ENCODE measurements at regions of chr7 and their contacts with region 1.

Region 1: GRCh38 chr7:50304158-50304910 is at the start of gene IKZF1:
- DNase-seq: peak; percentile 45 to 71 (median 53)
- H3K4me3 ChIP-seq: peak within 1 kb of the TSS; percentile 92
- H3K4me3 Mint-ChIP-seq: peak within 1 kb of the TSS; percentile 95 to 100 (median 99)
- H3K27ac ChIP-seq: peak within 1 kb of the TSS; percentile 86
- H3K27ac Mint-ChIP-seq: peak within 1 kb of the TSS; percentile 92 to 99 (median 98)
- H3K4me1 ChIP-seq: peaks cover 50% of the 10 kb centered on the region
- H3K4me1 Mint-ChIP-seq: peaks cover 44 to 60% (median 59%) of the 10 kb centered on the region in 3 donors
- H3K27me3 ChIP-seq: no peaks in the 10 kb centered on the region
- H3K27me3 Mint-ChIP-seq: peaks cover 0 to 2% of the 10 kb centered on the region in 2 donors
- total RNA-seq, gene IKZF1: 225 to 226 TPM

Region 2: GRCh38 chr7:50266635-50267386 is 37.5 kb before region 1 on chr7:
- CTCF ChIA-PET with region 1: interaction called, 27 read pairs
- POLR2A ChIA-PET with region 1: interaction called, 23 read pairs
- DNase-seq: peak; percentile 52 to 90 (median 85)
- H3K4me3 ChIP-seq: peak overlapping the region; percentile 54
- H3K4me3 Mint-ChIP-seq: peak overlapping the region; percentile 75 to 87 (median 80)
- H3K27ac ChIP-seq: peak overlapping the region; percentile 22
- H3K27ac Mint-ChIP-seq: peak overlapping the region; percentile 88 to 98 (median 93)
- H3K4me1 ChIP-seq: peaks cover 98% of the 10 kb centered on the region
- H3K4me1 Mint-ChIP-seq: peaks cover 94 to 100% (median 98%) of the 10 kb centered on the region in 3 donors
- H3K27me3 ChIP-seq: no peaks in the 10 kb centered on the region
- H3K27me3 Mint-ChIP-seq: no peaks in the 10 kb centered on the region

Region 3: GRCh38 chr7:50317221-50317678 is 12.9 kb after region 1 on chr7:
- CTCF ChIA-PET with region 1: interaction called, 49 read pairs
- POLR2A ChIA-PET with region 1: interaction called, 12 read pairs
- DNase-seq: peak in 3 of 5 donors; percentile 74 to 85 (median 74)
- H3K4me3 ChIP-seq: peak overlapping the region; percentile 57
- H3K4me3 Mint-ChIP-seq: peak overlapping the region; percentile 79 to 100 (median 98)
- H3K27ac ChIP-seq: peak overlapping the region; percentile 66
- H3K27ac Mint-ChIP-seq: peak overlapping the region; percentile 92 to 99 (median 98)
- H3K4me1 ChIP-seq: peaks cover 98% of the 10 kb centered on the region
- H3K4me1 Mint-ChIP-seq: peaks cover 95 to 100% (median 99%) of the 10 kb centered on the region in 3 donors
- H3K27me3 ChIP-seq: no peaks in the 10 kb centered on the region
- H3K27me3 Mint-ChIP-seq: no peaks in the 10 kb centered on the region

Region 4: GRCh38 chr7:50349963-50350944 is 45.9 kb after region 1 on chr7:
- CTCF ChIA-PET with region 1: interaction called, 815 read pairs
- POLR2A ChIA-PET with region 1: interaction called, 10 read pairs
- DNase-seq: peak in 4 of 5 donors; percentile 46 to 80 (median 58)
- H3K4me3 ChIP-seq: peak overlapping the region; percentile 44
- H3K4me3 Mint-ChIP-seq: peak overlapping the region; percentile 59 to 90 (median 68)
- H3K27ac ChIP-seq: peak overlapping the region; percentile 73
- H3K27ac Mint-ChIP-seq: peak overlapping the region in 7 of 8 donors; percentile 92 to 100 (median 96)
- H3K4me1 ChIP-seq: peaks cover 97% of the 10 kb centered on the region
- H3K4me1 Mint-ChIP-seq: peaks cover 97 to 100% (median 100%) of the 10 kb centered on the region in 3 donors
- H3K27me3 ChIP-seq: no peaks in the 10 kb centered on the region
- H3K27me3 Mint-ChIP-seq: no peaks in the 10 kb centered on the region

Measured in CD8-positive, alpha-beta memory T cell (primary cell).